Caco-2 (cell line): ENCODE measurements at regions of chr1 and their contacts with region 1.

Region 1: DNA sequence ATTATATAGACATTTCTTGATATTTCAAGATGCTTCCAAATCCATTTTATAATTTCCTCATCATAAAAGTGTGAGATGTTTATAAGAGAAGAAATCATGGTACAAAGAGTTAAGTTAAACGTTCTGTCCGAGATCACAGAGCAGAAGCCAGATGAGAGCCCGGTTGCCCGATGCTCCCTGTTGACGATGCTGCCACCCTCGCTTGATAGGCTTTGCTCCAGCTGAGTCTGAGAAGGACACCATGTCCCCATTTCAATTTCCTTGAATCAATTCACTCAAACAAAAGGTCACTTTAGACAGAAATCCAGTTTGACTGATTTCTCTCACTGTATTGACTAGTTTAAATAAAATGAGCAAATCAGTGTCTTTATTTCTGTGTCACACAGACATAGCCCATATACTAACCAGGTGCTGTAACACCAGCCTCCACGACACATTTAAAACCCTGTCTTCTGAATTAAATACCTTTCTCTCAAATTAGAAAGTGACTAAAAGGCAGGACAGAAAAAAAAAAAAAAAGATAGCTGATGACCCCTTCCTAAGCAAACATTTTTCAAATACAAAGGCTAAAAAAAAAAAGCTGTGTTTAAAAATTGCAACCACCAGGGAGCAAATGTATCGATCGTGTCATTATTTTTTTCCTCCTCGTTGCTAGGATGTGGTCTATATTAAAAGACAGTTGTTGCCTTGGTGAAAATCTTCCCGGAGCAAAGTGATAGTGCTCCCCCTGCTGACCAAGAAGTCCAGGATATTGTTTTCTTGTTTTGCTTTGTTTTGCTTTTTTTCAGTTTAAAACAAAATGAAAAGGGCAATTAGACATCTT is 35.2 kb downstream of the DNASE2B start:
- DNase-seq: peak in 1 of 2 experiments; percentile 41
- H3K4me3 ChIP-seq: no peak overlapping the region
- H3K4me3 Mint-ChIP-seq: no peak overlapping the region
- H3K27ac Mint-ChIP-seq: no peak overlapping the region
- H3K4me1 ChIP-seq: no peaks in the 10 kb centered on the region
- H3K4me1 Mint-ChIP-seq: no peaks in the 10 kb centered on the region
- H3K27me3 ChIP-seq: no peaks in the 10 kb centered on the region
- H3K27me3 Mint-ChIP-seq: no peaks in the 10 kb centered on the region
- CTCF ChIP-seq: peak; percentile 53

Region 2: DNA sequence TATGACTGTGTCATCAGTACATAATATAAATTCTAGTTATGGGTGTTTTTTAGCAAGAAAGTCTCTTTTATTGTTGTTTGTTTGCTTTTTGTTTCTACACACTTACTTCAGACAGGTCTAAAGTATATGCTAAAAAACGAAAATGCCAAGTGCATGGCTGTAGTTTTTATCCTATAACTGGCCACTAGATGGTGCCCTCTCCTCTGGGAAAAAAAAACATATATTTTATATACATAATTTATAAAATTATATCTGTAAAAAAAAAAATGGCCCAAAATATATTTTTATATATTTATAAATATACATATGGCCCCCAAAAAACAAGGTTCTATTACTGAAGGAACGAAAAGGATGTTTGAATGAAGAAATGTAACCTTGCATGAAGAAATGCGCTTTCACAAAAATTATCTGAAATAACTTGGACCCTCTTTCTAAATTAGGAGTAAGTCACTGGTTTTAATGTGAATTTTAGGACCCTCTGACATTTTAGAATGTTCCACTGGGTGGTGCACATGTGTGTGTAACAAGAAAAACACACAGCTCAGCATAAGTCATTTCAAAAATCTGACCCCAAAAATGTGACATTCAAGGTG is 528.1 kb before region 1 on chr1:
- CTCF ChIA-PET with region 1: no interaction called
- POLR2A ChIA-PET with region 1: no interaction called
- intact Hi-C with region 1: loop called (anchors 5 kb)
- DNase-seq: peak in 1 of 2 experiments; percentile 10
- H3K4me3 ChIP-seq: no peak overlapping the region
- H3K4me3 Mint-ChIP-seq: no peak overlapping the region
- H3K27ac Mint-ChIP-seq: no peak overlapping the region
- H3K4me1 ChIP-seq: no peaks in the 10 kb centered on the region
- H3K4me1 Mint-ChIP-seq: no peaks in the 10 kb centered on the region
- H3K27me3 ChIP-seq: no peaks in the 10 kb centered on the region
- H3K27me3 Mint-ChIP-seq: no peaks in the 10 kb centered on the region
- CTCF ChIP-seq: peak; percentile 21 to 39

Region 3: GRCh38 chr1:83931658-83932253 is 501.7 kb before region 1 on chr1:
- CTCF ChIA-PET with region 1: no interaction called
- POLR2A ChIA-PET with region 1: no interaction called
- intact Hi-C with region 1: loop called (anchors 1 kb)
- DNase-seq: peak in 1 of 2 experiments; percentile 15
- H3K4me3 ChIP-seq: no peak overlapping the region
- H3K4me3 Mint-ChIP-seq: no peak overlapping the region
- H3K27ac Mint-ChIP-seq: no peak overlapping the region
- H3K4me1 ChIP-seq: no peaks in the 10 kb centered on the region
- H3K4me1 Mint-ChIP-seq: no peaks in the 10 kb centered on the region
- H3K27me3 ChIP-seq: no peaks in the 10 kb centered on the region
- H3K27me3 Mint-ChIP-seq: no peaks in the 10 kb centered on the region
- CTCF ChIP-seq: peak in 1 of 2 experiments; percentile 50

Region 4: DNA sequence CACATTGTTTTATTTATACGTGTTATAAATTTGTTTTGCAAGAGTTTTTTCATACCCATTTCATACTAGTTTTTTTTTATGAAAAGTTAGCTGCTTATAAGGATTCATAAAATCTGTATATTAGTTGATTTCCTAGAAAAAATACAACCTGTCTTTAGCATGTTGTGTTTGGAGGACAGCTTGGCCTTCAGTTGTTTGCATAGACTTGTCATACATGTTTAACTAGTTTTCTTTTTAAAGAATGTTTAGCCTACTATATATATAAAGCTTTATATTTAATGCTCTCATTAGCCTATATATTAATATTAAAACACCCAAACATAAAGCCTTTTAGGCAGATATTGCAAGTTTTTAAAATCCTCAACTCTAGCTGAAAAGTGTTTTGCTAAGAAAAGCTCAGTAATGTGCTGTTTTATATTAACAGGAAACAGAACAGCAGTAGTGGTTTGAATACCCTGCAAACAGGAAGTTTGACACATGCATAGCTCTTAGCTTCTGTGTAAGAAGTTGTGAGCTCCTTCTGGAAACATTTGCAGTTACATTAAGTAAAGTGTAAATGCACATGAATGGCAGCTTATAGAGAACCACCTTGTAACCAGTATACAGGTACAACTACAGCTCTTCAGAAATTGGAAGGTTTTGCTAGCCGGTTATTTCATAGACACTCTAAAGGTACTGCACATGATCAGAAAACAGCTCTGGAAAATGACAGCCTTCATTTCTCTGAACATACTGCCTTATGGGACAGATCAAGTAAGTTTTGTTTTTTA is 289.5 kb before region 1 on chr1 and contains the start of gene PRKACB:
- CTCF ChIA-PET with region 1: no interaction called
- POLR2A ChIA-PET with region 1: no interaction called
- intact Hi-C with region 1: loop called (anchors 1 kb)
- DNase-seq: no peak
- H3K4me3 ChIP-seq: no peak within 1 kb of the TSS
- H3K4me3 Mint-ChIP-seq: no peak within 1 kb of the TSS
- H3K27ac Mint-ChIP-seq: no peak within 1 kb of the TSS
- H3K4me1 ChIP-seq: no peaks in the 10 kb centered on the region
- H3K4me1 Mint-ChIP-seq: no peaks in the 10 kb centered on the region
- H3K27me3 ChIP-seq: no peaks in the 10 kb centered on the region
- H3K27me3 Mint-ChIP-seq: no peaks in the 10 kb centered on the region
- CTCF ChIP-seq: no peak
- total RNA-seq, gene PRKACB: 3.2 and 3.4 TPM in 2 replicates

Region 5: GRCh38 chr1:84271441-84272151 is 161.9 kb before region 1 on chr1:
- CTCF ChIA-PET with region 1: no interaction called
- POLR2A ChIA-PET with region 1: no interaction called
- intact Hi-C with region 1: loop called (anchors 10 kb)
- DNase-seq: peak; percentile 11 to 36
- H3K4me3 ChIP-seq: no peak overlapping the region
- H3K4me3 Mint-ChIP-seq: peak overlapping the region; percentile 51
- H3K27ac Mint-ChIP-seq: peak overlapping the region; percentile 92
- H3K4me1 ChIP-seq: peaks cover 37% of the 10 kb centered on the region
- H3K4me1 Mint-ChIP-seq: peaks cover 36% of the 10 kb centered on the region
- H3K27me3 ChIP-seq: no peaks in the 10 kb centered on the region
- H3K27me3 Mint-ChIP-seq: no peaks in the 10 kb centered on the region
- CTCF ChIP-seq: no peak

Region 6: GRCh38 chr1:84415396-84415795 is 18.1 kb before region 1 on chr1:
- CTCF ChIA-PET with region 1: no interaction called
- POLR2A ChIA-PET with region 1: no interaction called
- intact Hi-C with region 1: no loop called
- DNase-seq: no peak
- H3K4me3 ChIP-seq: no peak overlapping the region
- H3K4me3 Mint-ChIP-seq: no peak overlapping the region
- H3K27ac Mint-ChIP-seq: no peak overlapping the region
- H3K4me1 ChIP-seq: no peaks in the 10 kb centered on the region
- H3K4me1 Mint-ChIP-seq: no peaks in the 10 kb centered on the region
- H3K27me3 ChIP-seq: no peaks in the 10 kb centered on the region
- H3K27me3 Mint-ChIP-seq: no peaks in the 10 kb centered on the region
- CTCF ChIP-seq: no peak

Region 7: GRCh38 chr1:84936116-84936810 is 502.8 kb after region 1 on chr1:
- CTCF ChIA-PET with region 1: no interaction called
- POLR2A ChIA-PET with region 1: no interaction called
- intact Hi-C with region 1: loop called (anchors 10 kb)
- DNase-seq: peak in 1 of 2 experiments; percentile 48
- H3K4me3 ChIP-seq: no peak overlapping the region
- H3K4me3 Mint-ChIP-seq: no peak overlapping the region
- H3K27ac Mint-ChIP-seq: no peak overlapping the region
- H3K4me1 ChIP-seq: no peaks in the 10 kb centered on the region
- H3K4me1 Mint-ChIP-seq: no peaks in the 10 kb centered on the region
- H3K27me3 ChIP-seq: no peaks in the 10 kb centered on the region
- H3K27me3 Mint-ChIP-seq: peaks cover 17% of the 10 kb centered on the region
- CTCF ChIP-seq: peak; percentile 55 to 65